ENCODE measurements at regions of chr1 and their contacts with region 1.

Region 1: DNA sequence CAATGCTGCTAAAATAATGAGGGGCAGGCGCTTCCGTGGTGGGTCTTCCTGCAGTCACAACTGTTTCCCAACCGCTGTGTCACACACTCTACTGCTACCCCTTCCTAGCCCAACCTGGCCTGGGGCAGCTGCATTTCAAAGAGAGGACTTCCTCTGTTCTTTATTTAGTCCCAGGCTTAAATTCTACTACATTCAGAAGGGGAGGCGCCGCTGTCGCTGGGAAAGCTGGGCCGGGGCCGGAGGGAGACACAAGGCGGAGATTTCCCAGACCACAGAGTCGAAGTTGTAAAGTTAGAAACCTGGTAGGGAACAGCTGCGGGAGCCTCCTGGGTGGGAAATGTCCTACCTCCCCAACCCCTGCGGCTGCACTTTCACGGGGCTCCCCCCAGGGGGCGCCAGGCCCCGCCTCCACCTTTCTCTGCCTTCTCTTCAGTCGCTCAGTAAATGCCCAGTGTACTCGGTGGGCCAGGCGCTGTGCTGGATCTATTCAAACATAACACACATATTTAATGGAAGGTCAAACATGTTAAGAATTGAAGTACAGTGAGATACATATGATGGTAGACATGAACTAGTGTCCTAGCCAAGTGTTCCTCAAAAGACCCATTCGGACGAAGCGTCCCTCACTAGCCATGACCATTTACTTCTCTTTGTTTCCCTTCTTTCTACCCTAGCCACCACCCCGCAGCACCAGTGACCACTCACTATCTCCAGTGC is 23.1 kb downstream of the DYRK3 start:
- DNase-seq: peak; percentile 78
- ATAC-seq: peak; percentile 46

Region 2: GRCh38 chr1:206685769-206686485 is 27.5 kb after region 1 on chr1:
- intact Hi-C with region 1: loop called (anchors 2 kb)
- DNase-seq: peak; percentile 86
- ATAC-seq: peak; percentile 60

Measured in Right ventricle myocardium inferior (tissue), 1 donor.